Tibial artery (tissue), 4 donors: ENCODE measurements at regions of chr15 and their contacts with region 1.

Region 1: DNA sequence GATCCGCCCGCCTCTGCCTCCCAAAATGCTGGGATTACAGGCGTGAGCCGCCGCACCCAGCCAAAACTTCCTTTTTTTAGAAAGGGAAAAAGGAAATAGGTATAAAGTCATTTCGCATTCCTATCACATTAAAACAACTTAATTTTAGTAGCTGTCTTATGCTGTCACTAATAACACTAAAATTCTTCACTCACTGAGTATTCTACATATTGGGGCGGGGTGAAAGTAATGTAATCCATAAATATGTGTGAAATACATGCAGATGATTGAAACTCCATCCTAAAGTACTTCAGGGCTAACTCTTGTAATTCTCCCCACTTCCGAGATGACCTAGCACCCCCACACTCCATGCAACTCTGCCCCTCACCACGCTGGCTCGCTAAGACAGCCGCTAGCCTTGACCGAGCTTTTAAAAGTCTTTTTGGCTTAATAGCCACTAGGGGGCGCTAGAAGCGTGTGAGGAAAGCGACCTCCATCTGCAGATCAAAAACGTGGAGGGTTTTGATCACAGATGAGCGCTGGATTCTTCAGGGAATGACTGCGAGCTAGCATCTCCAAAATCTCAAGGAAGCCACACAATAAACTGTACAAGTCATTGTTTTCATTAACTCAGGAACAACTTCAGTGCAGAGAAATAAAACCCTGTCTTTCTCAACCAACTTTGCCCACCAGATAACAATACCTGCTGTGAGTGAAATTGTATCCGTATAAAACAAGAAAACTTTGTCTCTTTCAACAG is 129.3 kb upstream of the IGF1R start:
- DNase-seq: no peak
- H3K4me3 ChIP-seq: no peak overlapping the region
- H3K27ac ChIP-seq: no peak overlapping the region
- H3K4me1 ChIP-seq: peaks cover 0 to 4% (median 2%) of the 10 kb centered on the region in 4 donors
- H3K27me3 ChIP-seq: no peaks in the 10 kb centered on the region
- CTCF ChIP-seq: peak; percentile 58 to 84

Region 2: DNA sequence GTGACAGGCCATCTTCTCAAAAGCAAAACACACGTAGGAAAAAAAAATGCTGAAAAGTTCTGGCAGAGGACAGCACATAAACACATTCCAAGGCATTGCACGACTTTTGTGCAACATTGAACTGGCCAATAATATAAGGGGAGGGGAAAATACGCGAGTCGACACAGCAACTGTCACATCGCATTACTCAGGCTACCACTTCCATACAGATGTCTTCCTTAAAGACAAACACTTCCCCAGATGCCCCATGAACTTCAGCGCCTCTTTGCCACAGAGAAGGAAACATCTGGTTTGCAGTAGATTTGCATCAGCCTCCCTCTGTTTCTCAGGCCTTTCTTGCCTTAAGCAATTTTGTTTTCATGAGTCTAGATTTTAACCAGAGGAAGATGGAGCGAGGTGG is 15.0 kb before region 1 on chr15:
- intact Hi-C with region 1: loop called (anchors 1 kb)
- DNase-seq: peak in 1 of 2 donors; percentile 62
- H3K4me3 ChIP-seq: no peak overlapping the region
- H3K27ac ChIP-seq: peak overlapping the region; percentile 71 to 78
- H3K4me1 ChIP-seq: peaks cover 0 to 49% (median 35%) of the 10 kb centered on the region in 4 donors
- H3K27me3 ChIP-seq: no peaks in the 10 kb centered on the region
- CTCF ChIP-seq: no peak

Region 3: GRCh38 chr15:98845107-98845884 is 326.3 kb after region 1 on chr15:
- intact Hi-C with region 1: loop called (anchors 5 kb)
- DNase-seq: no peak
- H3K4me3 ChIP-seq: no peak overlapping the region
- H3K27ac ChIP-seq: no peak overlapping the region
- H3K4me1 ChIP-seq: peaks cover 0 to 94% (median 28%) of the 10 kb centered on the region in 4 donors
- H3K27me3 ChIP-seq: no peaks in the 10 kb centered on the region
- CTCF ChIP-seq: no peak